Breast epithelium (tissue), 4 donors: ENCODE measurements at regions of chr2 and their contacts with region 1.

Region 1: DNA sequence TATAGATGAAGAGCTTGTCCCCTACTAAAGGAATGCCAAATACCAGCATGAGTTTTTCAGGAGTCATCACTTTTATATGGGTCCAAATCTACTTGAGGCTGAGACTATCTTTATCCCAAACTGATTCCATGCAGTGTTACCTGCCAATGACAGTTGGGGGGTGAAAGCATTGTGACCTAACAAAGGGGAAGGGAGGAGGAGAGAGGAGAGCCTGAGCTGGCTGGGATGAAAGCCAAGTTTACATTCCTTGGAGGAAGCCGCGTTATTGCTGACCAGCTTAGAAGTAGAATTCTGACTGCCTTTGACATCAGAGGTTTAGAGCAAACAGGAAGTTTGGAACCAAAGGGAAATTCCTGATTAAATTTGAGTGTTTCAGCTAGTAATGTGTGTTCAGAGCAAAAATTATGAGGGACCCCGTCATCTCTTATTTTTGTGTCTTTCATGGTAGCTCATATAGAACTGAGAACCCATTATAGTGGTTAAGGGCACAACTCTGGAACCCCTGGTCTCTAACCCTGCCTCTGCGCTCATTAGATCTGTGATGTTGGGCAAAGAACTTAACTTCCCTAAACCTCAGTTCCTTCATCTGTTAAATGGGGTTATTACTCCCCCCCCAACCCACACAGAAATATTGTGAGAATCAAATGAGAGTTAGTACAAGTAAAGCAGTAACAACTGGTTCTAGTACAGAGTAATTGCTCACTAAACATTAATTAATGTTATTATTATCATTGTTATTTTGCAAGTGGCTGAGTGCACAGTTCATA is 199.3 kb upstream of the EPAS1 start:
- DNase-seq: peak in 1 of 2 donors; percentile 73
- H3K4me3 ChIP-seq: no peak overlapping the region
- H3K27ac ChIP-seq: peak overlapping the region; percentile 75 to 79
- H3K4me1 ChIP-seq: no peaks in the 10 kb centered on the region
- H3K27me3 ChIP-seq: no peaks in the 10 kb centered on the region
- CTCF ChIP-seq: no peak
- POLR2A ChIP-seq: no peak

Region 2: DNA sequence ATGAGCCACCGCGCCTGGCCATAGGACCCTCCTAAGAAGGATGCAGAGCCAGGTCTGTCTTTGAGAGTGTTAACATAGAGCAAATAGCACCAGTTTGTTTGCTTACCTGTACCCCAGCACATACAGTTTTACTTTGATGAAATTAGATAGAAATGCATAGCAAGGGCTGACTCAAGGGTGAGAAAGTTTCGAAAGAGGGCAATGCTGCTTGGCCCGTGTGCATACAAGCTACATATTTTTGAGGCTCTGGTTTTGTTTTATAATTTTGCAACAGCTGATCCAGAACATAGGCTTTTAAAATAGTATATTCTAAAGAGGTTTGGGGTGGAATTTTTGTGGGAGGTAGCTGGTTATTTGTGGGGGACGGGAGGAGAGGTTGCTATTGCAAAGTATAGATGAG is 666.0 kb after region 1 on chr2:
- intact Hi-C with region 1: no loop called
- DNase-seq: no peak
- H3K4me3 ChIP-seq: no peak overlapping the region
- H3K27ac ChIP-seq: no peak overlapping the region
- H3K4me1 ChIP-seq: no peaks in the 10 kb centered on the region
- H3K27me3 ChIP-seq: no peaks in the 10 kb centered on the region
- CTCF ChIP-seq: no peak
- POLR2A ChIP-seq: no peak

Region 3: DNA sequence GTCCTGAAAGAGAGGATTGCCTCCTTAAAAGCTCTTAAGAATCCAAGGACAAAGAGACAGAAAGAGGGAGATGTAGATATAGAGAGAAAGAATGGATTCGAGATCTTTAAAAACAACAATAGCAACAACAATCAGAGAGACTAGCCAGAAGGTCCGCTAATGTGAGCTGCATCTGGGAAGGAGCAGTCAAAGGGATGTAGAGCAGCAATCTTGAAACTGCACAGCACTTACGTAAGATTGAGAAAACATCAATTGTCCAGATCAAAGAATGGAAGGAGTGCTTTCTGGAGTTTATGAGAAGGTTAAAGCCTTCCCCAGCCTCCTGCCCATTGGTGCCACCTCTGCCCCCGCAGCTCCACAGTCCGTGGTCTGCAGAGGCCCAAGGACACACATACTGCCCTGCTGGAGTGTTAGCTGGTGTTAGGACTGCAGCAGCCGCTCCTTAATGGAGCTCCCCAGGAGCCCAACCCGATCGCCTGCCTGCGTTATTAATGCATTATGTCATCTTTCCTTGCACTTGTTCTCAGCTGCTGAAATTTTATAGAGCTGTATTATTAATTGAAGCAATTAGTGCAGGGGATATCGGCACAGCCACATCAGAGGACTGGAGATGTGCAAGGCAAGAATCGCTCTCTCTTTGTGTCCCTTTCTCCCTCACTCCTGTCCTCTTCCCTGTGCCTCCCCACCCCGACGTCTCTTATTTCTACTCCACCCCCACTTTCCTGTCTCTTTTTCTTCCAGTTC is 1151.4 kb after region 1 on chr2:
- intact Hi-C with region 1: loop called (anchors 10 kb)
- DNase-seq: no peak
- H3K4me3 ChIP-seq: no peak overlapping the region
- H3K27ac ChIP-seq: no peak overlapping the region
- H3K4me1 ChIP-seq: no peaks in the 10 kb centered on the region
- H3K27me3 ChIP-seq: no peaks in the 10 kb centered on the region
- CTCF ChIP-seq: no peak
- POLR2A ChIP-seq: no peak